ENCODE measurements at regions of chr1 and their contacts with region 1.

Region 1: GRCh38 chr1:89454845-89455521 is 69.6 kb upstream of the LRRC8B start:
- DNase-seq: peak; percentile 40
- CTCF ChIP-seq: peak; percentile 35

Region 2: DNA sequence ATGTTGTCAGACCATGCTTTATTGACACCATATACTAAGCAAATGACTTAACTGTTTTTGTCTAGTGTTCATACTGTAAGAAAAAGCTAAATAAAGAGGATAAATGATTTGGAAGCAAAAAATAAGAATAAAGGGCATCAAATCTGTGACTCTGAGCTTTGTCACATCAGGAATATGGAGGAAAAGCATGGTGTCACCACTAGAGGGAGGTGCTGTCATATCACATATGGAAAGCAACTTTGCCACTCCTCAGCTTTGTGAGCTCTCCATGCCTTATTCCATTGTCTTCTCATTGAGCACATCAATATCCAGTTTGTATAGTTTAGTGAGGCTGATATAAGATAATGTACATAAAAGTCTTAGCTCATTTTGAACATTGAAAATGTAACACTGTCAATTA is 369.2 kb before region 1 on chr1:
- in situ Hi-C with region 1: loop called (anchors 25 kb)
- DNase-seq: peak; percentile 57
- CTCF ChIP-seq: peak; percentile 67

Region 3: DNA sequence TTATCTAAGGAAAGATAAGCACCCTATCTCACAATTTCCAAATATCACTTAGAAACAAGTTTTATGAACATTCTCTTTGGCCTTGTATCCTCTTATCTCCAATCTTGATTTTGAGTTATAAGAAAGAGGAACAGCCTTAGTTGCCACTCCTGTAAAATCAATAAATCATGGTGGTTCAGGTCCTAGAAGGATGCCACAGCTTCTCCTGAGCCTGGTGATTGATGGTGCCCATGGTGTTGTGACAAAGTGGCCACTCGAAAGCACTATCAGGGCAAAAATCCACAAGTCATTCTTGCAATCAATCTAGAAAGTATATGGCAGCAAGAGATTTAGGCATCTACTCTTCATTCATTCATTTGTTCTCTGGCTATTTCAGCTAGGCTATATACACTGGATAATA is 63.3 kb before region 1 on chr1:
- in situ Hi-C with region 1: no loop called
- DNase-seq: no peak
- CTCF ChIP-seq: no peak

Measured in GM13976 (cell line).